ENCODE measurements at regions of chr3 and their contacts with region 1.

Region 1: GRCh38 chr3:111668912-111669488 is 73.9 kb upstream of the ZBED2 start:
- DNase-seq: peak; percentile 55 to 72
- ATAC-seq: peak; percentile 76 to 90
- H3K4me3 ChIP-seq: no peak overlapping the region
- H3K27ac ChIP-seq: peak overlapping the region; percentile 43 to 64; a peak in 5 of 6 replicates
- H3K4me1 ChIP-seq: peaks cover 37% of the 10 kb centered on the region
- CTCF ChIP-seq: peak; percentile 86
- EP300 ChIP-seq: no peak
- POLR2A ChIP-seq: no peak
- RAD21 ChIP-seq: peak; percentile 91

Region 2: DNA sequence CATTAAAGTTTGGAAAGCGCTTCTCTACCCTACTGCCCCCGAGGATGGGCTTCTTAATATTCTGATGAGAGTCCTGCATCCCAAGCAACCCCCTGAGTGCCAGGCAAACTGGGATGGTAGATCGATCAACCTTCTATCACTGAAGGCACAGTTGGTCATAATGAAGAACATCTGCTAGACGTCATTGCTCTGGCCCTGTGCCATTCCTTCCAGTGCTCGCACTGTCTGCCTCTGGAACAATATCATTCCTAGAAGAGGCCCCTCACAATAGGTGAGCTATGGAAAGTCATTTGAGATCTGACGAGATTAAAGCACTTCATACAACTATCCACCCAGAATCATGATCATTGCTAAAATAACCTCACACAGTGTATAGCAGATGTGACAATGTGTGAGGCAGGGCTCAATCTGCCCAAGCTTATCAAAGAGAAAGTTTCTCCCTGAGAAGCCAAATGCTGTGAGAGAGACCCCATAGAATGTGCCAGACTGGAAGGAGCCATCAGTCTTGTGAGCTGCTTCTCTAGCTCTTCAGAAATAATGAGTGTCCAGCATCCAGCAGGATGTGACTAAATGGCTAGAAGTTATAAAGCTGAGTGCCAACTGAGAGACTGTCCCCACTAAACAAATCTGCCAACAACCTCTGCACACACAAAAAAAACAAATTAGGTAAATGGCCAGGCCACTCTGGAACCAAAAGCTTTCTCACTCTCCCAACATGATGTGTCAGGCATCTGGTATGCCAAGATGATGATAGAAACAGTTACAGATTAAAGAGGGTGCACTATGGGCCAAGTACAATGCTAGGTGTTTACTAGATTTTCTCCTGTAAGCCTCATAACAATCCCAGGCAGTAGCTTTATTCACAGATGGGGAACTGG is 431.9 kb before region 1 on chr3:
- CTCF ChIA-PET with region 1: no interaction called
- POLR2A ChIA-PET with region 1: no interaction called
- DNase-seq: peak in 1 of 2 experiments; percentile 15
- ATAC-seq: no peak
- H3K4me3 ChIP-seq: no peak overlapping the region
- H3K27ac ChIP-seq: no peak overlapping the region
- H3K4me1 ChIP-seq: no peaks in the 10 kb centered on the region
- CTCF ChIP-seq: no peak
- EP300 ChIP-seq: no peak
- POLR2A ChIP-seq: no peak
- RAD21 ChIP-seq: no peak

Region 3: GRCh38 chr3:111653766-111654165 is 15.2 kb before region 1 on chr3:
- CTCF ChIA-PET with region 1: interaction called, 10 read pairs
- POLR2A ChIA-PET with region 1: no interaction called
- DNase-seq: no peak
- ATAC-seq: no peak
- H3K4me3 ChIP-seq: no peak overlapping the region
- H3K27ac ChIP-seq: no peak overlapping the region
- H3K4me1 ChIP-seq: peaks cover 13% of the 10 kb centered on the region; the same call in 2 of the 3 replicates
- CTCF ChIP-seq: no peak
- EP300 ChIP-seq: no peak
- POLR2A ChIP-seq: no peak
- RAD21 ChIP-seq: no peak

Region 4: GRCh38 chr3:111681661-111682426 is 12.8 kb after region 1 on chr3:
- CTCF ChIA-PET with region 1: interaction called, 20 read pairs
- POLR2A ChIA-PET with region 1: no interaction called
- DNase-seq: no peak
- ATAC-seq: no peak
- H3K4me3 ChIP-seq: no peak overlapping the region
- H3K27ac ChIP-seq: 0 out of 6 replicates have a peak overlapping the region, but pooled peaks of 1 of the 2 experiments have one; percentile 1
- H3K4me1 ChIP-seq: peaks cover 34% of the 10 kb centered on the region
- CTCF ChIP-seq: no peak
- EP300 ChIP-seq: no peak
- POLR2A ChIP-seq: no peak
- RAD21 ChIP-seq: no peak

Region 5: DNA sequence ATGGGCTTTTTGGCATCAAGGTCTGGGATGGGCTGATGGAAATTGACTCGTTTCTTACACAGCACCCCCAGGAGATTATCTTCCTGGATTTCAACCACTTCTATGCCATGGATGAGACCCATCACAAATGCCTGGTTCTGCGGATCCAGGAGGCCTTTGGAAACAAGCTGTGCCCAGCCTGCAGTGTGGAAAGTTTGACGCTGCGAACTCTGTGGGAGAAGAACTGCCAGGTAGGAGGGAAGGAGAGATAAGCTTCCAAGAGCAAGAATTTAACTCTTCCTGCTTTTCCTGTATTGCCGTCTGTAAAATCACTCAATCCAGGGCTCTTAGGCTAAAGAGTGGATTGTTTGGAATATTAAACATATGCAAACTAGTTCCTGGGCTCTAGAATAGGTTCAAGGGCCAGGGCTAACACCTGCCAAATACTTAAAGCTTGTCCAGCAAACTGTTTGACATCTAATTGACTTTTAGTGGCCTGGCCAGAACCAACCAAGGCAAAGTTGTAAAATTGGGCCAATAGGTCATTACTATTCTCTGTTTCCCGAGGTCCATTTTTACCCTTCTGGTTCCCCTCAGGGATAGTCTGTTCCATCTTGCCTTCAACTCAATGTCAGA is 39.3 kb after region 1 on chr3:
- CTCF ChIA-PET with region 1: interaction called, 11 read pairs
- POLR2A ChIA-PET with region 1: no interaction called
- DNase-seq: no peak
- ATAC-seq: no peak
- H3K4me3 ChIP-seq: no peak overlapping the region
- H3K27ac ChIP-seq: no peak overlapping the region
- H3K4me1 ChIP-seq: no peaks in the 10 kb centered on the region
- CTCF ChIP-seq: no peak
- EP300 ChIP-seq: no peak
- POLR2A ChIP-seq: no peak
- RAD21 ChIP-seq: no peak

Region 6: DNA sequence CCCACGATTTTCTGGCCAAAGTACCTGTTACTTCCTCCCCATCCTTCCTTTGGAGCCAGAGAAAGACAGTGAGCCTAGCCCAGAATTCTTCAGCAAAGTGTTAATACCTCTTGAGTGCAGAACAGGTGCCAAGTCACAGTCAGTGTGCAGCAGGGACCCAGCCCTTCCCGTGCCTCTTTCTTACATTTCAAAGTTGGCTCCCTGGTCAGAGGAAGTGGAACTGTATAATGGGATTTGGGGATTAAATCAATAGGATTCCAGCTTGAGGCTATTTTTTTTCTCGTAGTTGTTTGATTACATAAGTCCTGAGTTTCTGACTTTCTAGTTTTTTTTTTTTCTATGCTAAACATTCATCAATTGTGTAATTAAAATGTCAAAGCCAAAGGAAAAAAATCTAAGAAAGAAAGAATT is 257.3 kb after region 1 on chr3:
- CTCF ChIA-PET with region 1: no interaction called
- POLR2A ChIA-PET with region 1: no interaction called
- DNase-seq: no peak
- ATAC-seq: no peak
- H3K4me3 ChIP-seq: no peak overlapping the region
- H3K27ac ChIP-seq: peak overlapping the region in 1 of 2 experiments; percentile 69; a peak in 3 of 6 replicates
- H3K4me1 ChIP-seq: peaks cover 33% of the 10 kb centered on the region
- CTCF ChIP-seq: no peak
- EP300 ChIP-seq: no peak
- POLR2A ChIP-seq: no peak
- RAD21 ChIP-seq: no peak

Measured in A549 (cell line).